Mammary epithelial cell (primary cell): ENCODE measurements at regions of chr9 and their contacts with region 1.

Region 1: GRCh38 chr9:100598641-100599145 is 20.8 kb downstream of the CAVIN4 start:
- DNase-seq: peak; percentile 78
- H3K4me3 ChIP-seq: peak overlapping the region; percentile 46 to 71 (median 54)
- H3K27ac ChIP-seq: no peak overlapping the region
- H3K4me1 ChIP-seq: peaks cover 11% of the 10 kb centered on the region
- H3K27me3 ChIP-seq: no peaks in the 10 kb centered on the region
- CTCF ChIP-seq: no peak

Region 2: GRCh38 chr9:99690573-99690972 is 908.1 kb before region 1 on chr9:
- CTCF ChIA-PET with region 1: no interaction called
- dilution Hi-C with region 1: no loop called
- in situ Hi-C with region 1: no loop called
- intact Hi-C with region 1: no loop called
- DNase-seq: no peak
- H3K4me3 ChIP-seq: no peak overlapping the region
- H3K27ac ChIP-seq: no peak overlapping the region
- H3K4me1 ChIP-seq: no peaks in the 10 kb centered on the region
- H3K27me3 ChIP-seq: peaks cover 7% of the 10 kb centered on the region
- CTCF ChIP-seq: no peak

Region 3: DNA sequence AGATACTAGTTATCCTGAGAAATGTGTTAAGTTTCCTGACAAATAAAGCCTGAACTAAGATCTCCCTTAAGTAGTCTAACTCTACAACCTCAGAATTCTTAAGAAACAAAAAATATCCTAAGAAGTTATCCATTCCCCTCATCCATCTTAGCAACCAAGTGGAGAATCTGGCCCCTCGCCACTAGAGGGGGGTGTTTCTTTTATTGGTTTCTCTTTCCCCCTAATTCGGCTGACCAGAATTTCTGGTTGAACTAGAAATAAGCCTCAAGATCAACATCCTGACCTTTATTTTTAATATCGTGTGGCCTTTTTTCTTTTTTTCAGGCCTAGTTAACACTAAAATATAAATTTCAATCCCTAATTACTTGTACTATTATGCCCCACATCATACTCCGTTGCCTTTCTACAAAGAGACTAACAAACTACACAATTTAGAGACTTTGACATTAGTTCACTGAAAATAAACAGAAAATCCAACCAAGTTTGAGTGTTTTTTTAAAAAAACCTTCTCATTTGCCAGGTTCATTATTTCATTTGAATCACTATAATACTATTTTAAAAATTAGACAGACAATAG is 791.3 kb before region 1 on chr9:
- CTCF ChIA-PET with region 1: no interaction called
- dilution Hi-C with region 1: no loop called
- in situ Hi-C with region 1: loop called in 1 of 2 experiments (anchors 25 kb)
- intact Hi-C with region 1: loop called (anchors 5 kb)
- DNase-seq: peak; percentile 63
- H3K4me3 ChIP-seq: no peak overlapping the region
- H3K27ac ChIP-seq: no peak overlapping the region
- H3K4me1 ChIP-seq: peaks cover 4% of the 10 kb centered on the region
- H3K27me3 ChIP-seq: no peaks in the 10 kb centered on the region
- CTCF ChIP-seq: peak; percentile 71 to 78

Region 4: DNA sequence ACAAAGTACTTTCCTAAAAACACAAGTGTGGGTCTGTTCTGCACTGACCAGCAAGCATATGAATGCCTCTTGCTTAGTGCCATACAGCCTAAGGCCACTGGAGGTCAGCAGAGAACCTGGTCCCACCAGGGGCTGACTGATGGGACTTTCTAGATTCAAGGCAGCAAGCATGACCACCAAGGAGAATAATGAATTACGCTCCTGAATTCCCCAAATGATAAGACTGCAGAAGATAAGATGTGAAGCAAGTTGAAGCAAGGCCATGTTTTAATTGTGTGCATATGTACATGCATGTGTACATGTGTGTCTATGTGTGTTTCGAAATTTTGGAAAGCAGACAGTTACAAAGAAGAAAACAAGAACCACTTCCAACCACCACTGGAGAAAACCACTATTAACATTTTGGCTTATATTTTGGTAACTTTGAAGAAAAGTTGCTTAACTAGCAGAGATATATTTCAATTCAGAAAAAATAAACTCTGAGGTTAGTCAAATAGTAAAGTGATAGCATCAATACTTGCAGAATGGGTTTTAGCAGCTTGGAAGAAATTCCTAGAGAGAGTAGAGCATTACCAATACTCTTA is 570.4 kb before region 1 on chr9:
- CTCF ChIA-PET with region 1: no interaction called
- dilution Hi-C with region 1: no loop called
- in situ Hi-C with region 1: loop called in 1 of 2 experiments (anchors 25 kb)
- intact Hi-C with region 1: loop called (anchors 1 kb)
- DNase-seq: peak; percentile 53
- H3K4me3 ChIP-seq: no peak overlapping the region
- H3K27ac ChIP-seq: no peak overlapping the region
- H3K4me1 ChIP-seq: no peaks in the 10 kb centered on the region
- H3K27me3 ChIP-seq: no peaks in the 10 kb centered on the region
- CTCF ChIP-seq: peak; percentile 95 to 97

Region 5: GRCh38 chr9:100341889-100342288 is 256.8 kb before region 1 on chr9:
- CTCF ChIA-PET with region 1: no interaction called
- dilution Hi-C with region 1: loop called (anchors 10 kb)
- in situ Hi-C with region 1: loop called in 1 of 2 experiments (anchors 25 kb)
- intact Hi-C with region 1: no loop called
- DNase-seq: no peak
- H3K4me3 ChIP-seq: no peak overlapping the region
- H3K27ac ChIP-seq: no peak overlapping the region
- H3K4me1 ChIP-seq: no peaks in the 10 kb centered on the region
- H3K27me3 ChIP-seq: no peaks in the 10 kb centered on the region
- CTCF ChIP-seq: no peak

Region 6: DNA sequence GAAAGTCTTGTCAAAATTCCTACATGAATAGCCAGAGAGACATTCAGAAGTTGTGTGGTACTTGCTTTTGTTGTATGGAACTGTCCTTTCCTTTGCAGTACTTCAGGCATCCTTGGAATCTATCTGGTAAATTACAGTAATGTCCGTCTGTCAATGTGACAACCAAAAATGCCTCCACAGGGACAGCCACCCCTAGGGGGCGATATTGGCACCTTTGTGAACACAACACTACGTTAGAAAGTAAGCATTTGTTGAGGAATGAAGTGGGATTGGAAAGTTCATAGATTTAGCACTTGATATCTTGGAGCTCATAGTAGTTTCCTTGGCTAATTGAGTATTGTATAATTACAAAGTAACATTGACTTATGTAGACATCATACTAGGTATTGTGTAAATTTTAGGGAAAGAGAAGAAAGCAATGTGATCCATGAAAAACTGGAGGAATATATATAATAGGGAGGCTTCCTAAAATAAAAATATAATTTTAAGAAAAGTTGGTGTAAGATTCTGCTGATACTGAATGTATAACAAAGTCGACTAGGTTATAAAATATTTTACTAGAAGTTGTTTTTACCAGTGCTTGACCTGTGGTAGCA is 93.0 kb before region 1 on chr9:
- CTCF ChIA-PET with region 1: no interaction called
- dilution Hi-C with region 1: no loop called
- in situ Hi-C with region 1: no loop called
- intact Hi-C with region 1: loop called (anchors 1 kb)
- DNase-seq: peak; percentile 44
- H3K4me3 ChIP-seq: no peak overlapping the region
- H3K27ac ChIP-seq: no peak overlapping the region
- H3K4me1 ChIP-seq: no peaks in the 10 kb centered on the region
- H3K27me3 ChIP-seq: no peaks in the 10 kb centered on the region
- CTCF ChIP-seq: peak; percentile 84

Region 7: GRCh38 chr9:100619665-100620064 is 21.0 kb after region 1 on chr9:
- CTCF ChIA-PET with region 1: no interaction called
- dilution Hi-C with region 1: no loop called
- in situ Hi-C with region 1: no loop called
- intact Hi-C with region 1: no loop called
- DNase-seq: no peak
- H3K4me3 ChIP-seq: no peak overlapping the region
- H3K27ac ChIP-seq: no peak overlapping the region
- H3K4me1 ChIP-seq: no peaks in the 10 kb centered on the region
- H3K27me3 ChIP-seq: no peaks in the 10 kb centered on the region
- CTCF ChIP-seq: no peak

Region 8: DNA sequence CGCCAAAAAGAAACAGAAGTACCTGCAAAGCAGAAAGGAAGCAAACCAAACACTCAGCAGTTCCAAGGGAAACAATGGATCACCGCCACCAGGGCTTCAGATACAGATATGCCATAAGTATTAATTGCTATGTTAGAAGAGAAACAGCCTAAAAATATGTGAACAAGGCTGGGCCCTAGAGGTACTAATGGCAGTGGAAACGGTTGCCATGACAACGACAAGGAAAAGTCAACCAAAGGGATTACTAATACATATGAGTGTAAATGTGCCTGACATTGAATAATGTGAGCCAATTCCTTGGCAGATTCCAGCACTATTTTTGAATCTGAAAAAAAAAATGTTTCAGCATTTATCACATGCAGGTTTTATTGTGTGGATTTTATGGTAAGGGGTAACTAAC is 54.2 kb after region 1 on chr9:
- CTCF ChIA-PET with region 1: no interaction called
- dilution Hi-C with region 1: no loop called
- in situ Hi-C with region 1: no loop called
- intact Hi-C with region 1: no loop called
- DNase-seq: peak; percentile 6
- H3K4me3 ChIP-seq: no peak overlapping the region
- H3K27ac ChIP-seq: no peak overlapping the region
- H3K4me1 ChIP-seq: no peaks in the 10 kb centered on the region
- H3K27me3 ChIP-seq: no peaks in the 10 kb centered on the region
- CTCF ChIP-seq: no peak

Region 9: DNA sequence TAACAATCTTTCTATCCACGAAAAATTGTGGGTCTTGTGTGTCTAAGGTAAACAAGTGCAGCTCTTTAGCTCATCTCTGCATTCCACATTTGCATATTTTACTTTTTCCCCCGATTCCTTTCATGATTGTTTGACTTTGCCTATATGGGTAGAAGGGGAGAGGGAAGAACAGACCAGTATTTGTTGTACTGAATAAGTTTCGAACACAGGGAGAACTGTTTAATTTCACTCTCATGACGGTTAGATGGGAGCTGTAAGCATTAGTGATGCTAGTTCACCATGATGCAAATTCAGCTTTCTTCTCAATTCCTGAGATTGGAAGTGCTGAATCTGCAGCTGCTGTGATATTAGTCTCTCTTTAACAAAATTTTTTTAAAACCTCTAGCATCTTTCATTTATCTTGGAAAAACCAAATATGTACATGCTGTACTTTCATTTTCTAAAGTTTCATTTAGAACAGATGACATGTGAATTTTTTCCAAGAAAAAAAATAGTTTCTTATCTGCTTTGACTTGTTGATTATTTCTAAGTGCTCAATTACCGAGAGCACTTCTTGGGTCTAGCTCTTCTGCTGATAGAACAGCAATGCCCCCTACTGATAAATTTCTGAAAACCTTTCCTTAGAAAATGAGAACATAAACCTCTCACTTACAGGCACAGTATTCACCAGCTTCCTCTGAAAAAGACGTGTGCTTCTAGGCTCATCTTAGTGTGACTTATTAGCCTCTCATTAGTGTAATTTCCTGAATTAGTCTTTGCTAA is 636.6 kb after region 1 on chr9:
- CTCF ChIA-PET with region 1: interaction called, 8 read pairs
- dilution Hi-C with region 1: no loop called
- in situ Hi-C with region 1: no loop called
- intact Hi-C with region 1: loop called (anchors 1 kb)
- DNase-seq: peak; percentile 19
- H3K4me3 ChIP-seq: no peak overlapping the region
- H3K27ac ChIP-seq: no peak overlapping the region
- H3K4me1 ChIP-seq: no peaks in the 10 kb centered on the region
- H3K27me3 ChIP-seq: no peaks in the 10 kb centered on the region
- CTCF ChIP-seq: peak; percentile 37 to 65